CD8-positive, alpha-beta T cell (primary cell): ENCODE measurements at regions of chr16 and their contacts with region 1.

Region 1: GRCh38 chr16:28974437-28975157 is at the start of gene SPNS1:
- DNase-seq: peak; percentile 78 to 95 (median 90)
- ATAC-seq: peak; percentile 87
- H3K4me3 ChIP-seq: peak within 1 kb of the TSS; percentile 68 to 96
- H3K4me3 Mint-ChIP-seq: peak within 1 kb of the TSS; percentile 98
- H3K27ac ChIP-seq: peak within 1 kb of the TSS; percentile 55 to 79
- H3K27ac Mint-ChIP-seq: peak within 1 kb of the TSS; percentile 97
- H3K4me1 ChIP-seq: peaks cover 19% of the 10 kb centered on the region
- H3K4me1 Mint-ChIP-seq: peaks cover 41% of the 10 kb centered on the region
- H3K27me3 ChIP-seq: no peaks in the 10 kb centered on the region
- H3K27me3 Mint-ChIP-seq: no peaks in the 10 kb centered on the region
- CTCF ChIP-seq: no peak
- total RNA-seq, gene SPNS1: 31.7 to 31.8 TPM

Region 2: DNA sequence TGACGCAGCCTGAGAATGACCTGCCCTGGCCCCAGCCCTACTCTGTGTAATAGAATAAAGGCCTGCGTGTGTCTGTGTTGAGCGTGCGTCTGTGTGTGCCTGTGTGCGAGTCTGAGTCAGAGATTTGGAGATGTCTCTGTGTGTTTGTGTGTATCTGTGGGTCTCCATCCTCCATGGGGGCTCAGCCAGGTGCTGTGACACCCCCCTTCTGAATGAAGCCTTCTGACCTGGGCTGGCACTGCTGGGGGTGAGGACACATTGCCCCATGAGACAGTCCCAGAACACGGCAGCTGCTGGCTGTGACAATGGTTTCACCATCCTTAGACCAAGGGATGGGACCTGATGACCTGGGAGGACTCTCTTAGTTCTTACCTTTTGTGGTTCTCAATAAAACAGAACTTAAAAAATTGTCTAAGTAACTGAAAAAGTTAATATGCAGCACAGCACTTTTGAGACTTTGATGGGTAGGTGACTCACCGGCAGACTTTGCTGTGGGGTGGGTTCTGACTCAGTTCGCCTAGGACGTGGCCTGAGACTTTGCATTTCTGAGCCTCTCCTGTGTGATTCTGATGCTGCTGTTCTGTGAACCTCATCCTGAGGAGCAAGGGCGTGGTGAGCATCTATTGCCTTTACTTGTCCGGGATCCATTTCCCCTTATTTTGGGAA is 15.9 kb after region 1 on chr16:
- CTCF ChIA-PET with region 1: interaction called, 29 read pairs
- POLR2A ChIA-PET with region 1: interaction called, 26 read pairs
- intact Hi-C with region 1: loop called in 1 of 2 experiments (anchors 1 kb)
- DNase-seq: peak in 7 of 9 experiments; percentile 45 to 74 (median 68)
- ATAC-seq: peak; percentile 55
- H3K4me3 ChIP-seq: peak overlapping the region in 1 of 2 experiments; percentile 26
- H3K4me3 Mint-ChIP-seq: peak overlapping the region; percentile 99
- H3K27ac ChIP-seq: peak overlapping the region; percentile 50 to 71
- H3K27ac Mint-ChIP-seq: peak overlapping the region; percentile 95
- H3K4me1 ChIP-seq: peaks cover 49% of the 10 kb centered on the region
- H3K4me1 Mint-ChIP-seq: peaks cover 51% of the 10 kb centered on the region
- H3K27me3 ChIP-seq: no peaks in the 10 kb centered on the region
- H3K27me3 Mint-ChIP-seq: no peaks in the 10 kb centered on the region
- CTCF ChIP-seq: no peak

Region 3: GRCh38 chr16:29023279-29024277 is 49.0 kb after region 1 on chr16:
- CTCF ChIA-PET with region 1: interaction called, 18 read pairs
- POLR2A ChIA-PET with region 1: interaction called, 5 read pairs
- intact Hi-C with region 1: no loop called
- DNase-seq: peak in 6 of 9 experiments; percentile 30 to 67 (median 44)
- ATAC-seq: peak; percentile 47
- H3K4me3 ChIP-seq: peak overlapping the region in 1 of 2 experiments; percentile 22
- H3K4me3 Mint-ChIP-seq: peak overlapping the region; percentile 64
- H3K27ac ChIP-seq: peak overlapping the region; percentile 13 to 60
- H3K27ac Mint-ChIP-seq: peak overlapping the region; percentile 91
- H3K4me1 ChIP-seq: peaks cover 60% of the 10 kb centered on the region
- H3K4me1 Mint-ChIP-seq: peaks cover 70% of the 10 kb centered on the region
- H3K27me3 ChIP-seq: no peaks in the 10 kb centered on the region
- H3K27me3 Mint-ChIP-seq: no peaks in the 10 kb centered on the region
- CTCF ChIP-seq: no peak

Region 4: GRCh38 chr16:29029168-29029994 is 54.8 kb after region 1 on chr16:
- CTCF ChIA-PET with region 1: interaction called, 16 read pairs
- POLR2A ChIA-PET with region 1: interaction called, 4 read pairs
- intact Hi-C with region 1: no loop called
- DNase-seq: peak in 8 of 9 experiments; percentile 58 to 88 (median 78)
- ATAC-seq: peak; percentile 98
- H3K4me3 ChIP-seq: peak overlapping the region in 1 of 2 experiments; percentile 35
- H3K4me3 Mint-ChIP-seq: no peak overlapping the region
- H3K27ac ChIP-seq: no peak overlapping the region
- H3K27ac Mint-ChIP-seq: peak overlapping the region; percentile 66
- H3K4me1 ChIP-seq: peaks cover 33% of the 10 kb centered on the region
- H3K4me1 Mint-ChIP-seq: peaks cover 44% of the 10 kb centered on the region
- H3K27me3 ChIP-seq: no peaks in the 10 kb centered on the region
- H3K27me3 Mint-ChIP-seq: no peaks in the 10 kb centered on the region
- CTCF ChIP-seq: no peak